Activated CD4-positive, alpha-beta T cell treated with anti-CD3 and anti-CD28 coated beads for 36 hours (primary cell): ENCODE measurements at regions of chr1 and their contacts with region 1.

Region 1: GRCh38 chr1:56831871-56832693 is 12.9 kb upstream of the FYB2 start:
- DNase-seq: peak; percentile 80
- ATAC-seq: peak; percentile 60
- H3K4me3 Mint-ChIP-seq: no peak overlapping the region
- H3K27ac Mint-ChIP-seq: no peak overlapping the region
- H3K4me1 Mint-ChIP-seq: peaks cover 3% of the 10 kb centered on the region
- H3K27me3 Mint-ChIP-seq: peaks cover 6% of the 10 kb centered on the region

Region 2: GRCh38 chr1:56967900-56968832 is 136.1 kb after region 1 on chr1:
- CTCF ChIA-PET with region 1: no interaction called
- POLR2A ChIA-PET with region 1: no interaction called
- intact Hi-C with region 1: loop called (anchors 2 to 5 kb)
- DNase-seq: peak; percentile 42
- ATAC-seq: no peak
- H3K4me3 Mint-ChIP-seq: no peak overlapping the region
- H3K27ac Mint-ChIP-seq: no peak overlapping the region
- H3K4me1 Mint-ChIP-seq: no peaks in the 10 kb centered on the region
- H3K27me3 Mint-ChIP-seq: peaks cover 12% of the 10 kb centered on the region

Region 3: GRCh38 chr1:57061369-57061768 is 229.3 kb after region 1 on chr1:
- CTCF ChIA-PET with region 1: no interaction called
- POLR2A ChIA-PET with region 1: no interaction called
- intact Hi-C with region 1: loop called in 1 of 2 experiments (anchors 1 kb)
- DNase-seq: no peak
- ATAC-seq: no peak
- H3K4me3 Mint-ChIP-seq: no peak overlapping the region
- H3K27ac Mint-ChIP-seq: no peak overlapping the region
- H3K4me1 Mint-ChIP-seq: no peaks in the 10 kb centered on the region
- H3K27me3 Mint-ChIP-seq: no peaks in the 10 kb centered on the region

Region 4: GRCh38 chr1:58047265-58047858 is 1215.3 kb after region 1 on chr1:
- CTCF ChIA-PET with region 1: interaction called, 7 read pairs
- POLR2A ChIA-PET with region 1: no interaction called
- intact Hi-C with region 1: loop called in 1 of 2 experiments (anchors 1 kb)
- DNase-seq: peak; percentile 60
- ATAC-seq: no peak
- H3K4me3 Mint-ChIP-seq: no peak overlapping the region
- H3K27ac Mint-ChIP-seq: no peak overlapping the region
- H3K4me1 Mint-ChIP-seq: no peaks in the 10 kb centered on the region
- H3K27me3 Mint-ChIP-seq: peaks cover 2% of the 10 kb centered on the region

Region 5: GRCh38 chr1:58162952-58163550 is 1331.0 kb after region 1 on chr1:
- CTCF ChIA-PET with region 1: no interaction called
- POLR2A ChIA-PET with region 1: no interaction called
- intact Hi-C with region 1: loop called in 1 of 2 experiments (anchors 5 kb)
- DNase-seq: peak; percentile 22
- ATAC-seq: no peak
- H3K4me3 Mint-ChIP-seq: no peak overlapping the region
- H3K27ac Mint-ChIP-seq: no peak overlapping the region
- H3K4me1 Mint-ChIP-seq: no peaks in the 10 kb centered on the region
- H3K27me3 Mint-ChIP-seq: no peaks in the 10 kb centered on the region